ENCODE measurements at regions of chr2 and their contacts with region 1.

Region 1: DNA sequence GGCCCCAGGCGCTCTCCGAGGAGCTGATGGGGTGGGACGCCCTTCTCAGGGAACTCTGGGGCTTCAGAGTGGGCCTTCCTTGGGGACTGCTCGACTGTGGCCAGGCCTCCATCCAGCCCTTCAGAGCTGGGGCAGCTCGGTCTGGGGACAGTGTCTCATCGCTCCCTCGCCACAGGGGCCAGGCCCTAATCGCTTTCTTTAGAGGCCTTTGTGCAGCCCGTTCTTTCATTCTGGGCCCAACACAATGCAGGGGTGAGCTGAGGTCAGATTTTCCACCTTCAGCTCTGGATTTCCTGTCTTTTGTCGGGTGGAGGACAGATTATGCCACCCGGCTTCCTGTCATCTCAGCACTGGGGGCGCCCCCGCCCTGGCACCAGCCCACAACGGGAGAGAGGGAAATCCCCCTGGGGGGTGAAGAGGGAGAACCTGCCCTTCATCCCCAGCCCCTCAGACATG is 25.2 kb downstream of the MYCN start:
- DNase-seq: peak; percentile 85
- H3K4me3 Mint-ChIP-seq: peak overlapping the region; percentile 1
- H3K27ac Mint-ChIP-seq: peak overlapping the region; percentile 58
- H3K4me1 Mint-ChIP-seq: peaks cover 57% of the 10 kb centered on the region
- H3K27me3 Mint-ChIP-seq: peaks cover 2% of the 10 kb centered on the region

Region 2: DNA sequence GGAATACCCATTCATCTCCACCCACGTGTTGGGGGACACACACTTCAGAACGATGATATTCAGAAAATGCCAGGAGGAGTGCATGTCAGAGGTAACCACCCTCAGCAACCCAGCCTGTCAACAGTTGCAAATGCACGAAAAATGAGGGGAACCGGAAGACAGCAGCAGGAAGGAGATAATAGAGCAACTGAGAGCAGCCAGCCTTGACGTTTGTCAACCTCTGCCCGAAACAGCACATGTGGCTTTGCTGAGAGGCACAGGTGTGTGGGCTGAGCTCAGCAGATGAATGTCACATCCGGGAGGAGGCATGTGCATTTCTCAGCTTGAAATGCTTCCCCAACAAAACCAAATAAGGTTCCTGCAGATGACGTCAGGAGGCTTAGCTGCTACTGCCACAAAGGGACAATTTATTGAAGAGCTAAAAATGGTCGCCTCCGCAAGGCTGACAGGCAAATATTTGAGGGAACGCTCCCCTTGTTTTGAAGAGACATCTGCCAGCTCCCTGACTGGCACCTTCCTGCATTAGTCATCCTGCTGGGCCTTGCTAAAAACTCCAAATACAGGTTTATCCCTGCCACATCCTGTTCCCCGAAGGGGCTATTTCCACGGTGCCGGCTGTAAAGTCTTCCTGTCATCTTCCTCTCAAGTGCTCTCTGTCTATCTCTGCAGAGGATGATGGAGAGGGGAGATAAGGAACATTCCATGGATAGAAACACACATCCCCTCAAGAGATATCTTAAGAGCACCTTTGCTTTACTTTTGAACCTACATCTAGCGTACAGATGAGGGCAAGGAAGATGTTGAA is 823.3 kb before region 1 on chr2:
- CTCF ChIA-PET with region 1: no interaction called
- intact Hi-C with region 1: loop called (anchors 2 kb)
- DNase-seq: peak; percentile 90
- H3K4me3 Mint-ChIP-seq: peak overlapping the region; percentile 20
- H3K27ac Mint-ChIP-seq: peak overlapping the region; percentile 90
- H3K4me1 Mint-ChIP-seq: peaks cover 23% of the 10 kb centered on the region
- H3K27me3 Mint-ChIP-seq: peaks cover 5% of the 10 kb centered on the region

Region 3: DNA sequence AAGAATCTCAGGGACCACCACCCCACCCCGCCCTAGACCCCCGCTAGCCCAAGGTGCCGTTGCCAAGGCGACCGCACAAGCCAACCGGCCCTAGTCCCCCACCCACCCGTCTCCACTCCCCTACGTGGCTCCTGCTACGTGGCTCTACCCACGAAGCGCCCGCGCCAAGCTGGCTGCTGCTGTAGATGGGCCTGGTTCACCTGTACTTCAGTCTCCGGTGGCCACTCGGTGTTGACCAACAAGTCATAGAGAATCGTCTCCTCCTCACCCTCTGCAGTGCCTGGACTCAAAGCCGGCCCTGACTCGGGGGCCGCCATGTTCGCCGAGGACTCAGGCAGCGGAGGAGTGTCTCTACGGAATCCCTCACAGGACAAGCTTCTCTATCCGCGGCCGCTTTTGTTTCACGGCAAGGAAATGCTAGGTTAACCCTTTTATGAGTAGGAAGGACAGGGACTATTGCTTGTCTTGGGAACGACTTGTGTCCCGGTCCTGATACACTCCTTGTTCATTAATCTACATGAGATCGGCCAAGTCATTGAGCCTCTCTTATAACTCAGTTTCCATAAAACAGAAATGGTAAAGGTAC is 404.5 kb before region 1 on chr2 and contains the start of gene NBAS:
- CTCF ChIA-PET with region 1: no interaction called
- intact Hi-C with region 1: loop called (anchors 1 kb)
- DNase-seq: peak; percentile 94
- H3K4me3 Mint-ChIP-seq: peak within 1 kb of the TSS; percentile 98
- H3K27ac Mint-ChIP-seq: peak within 1 kb of the TSS; percentile 92
- H3K4me1 Mint-ChIP-seq: peaks cover 32% of the 10 kb centered on the region
- H3K27me3 Mint-ChIP-seq: no peaks in the 10 kb centered on the region
- total RNA-seq, gene NBAS: 45.5 to 46.4 TPM

Region 4: DNA sequence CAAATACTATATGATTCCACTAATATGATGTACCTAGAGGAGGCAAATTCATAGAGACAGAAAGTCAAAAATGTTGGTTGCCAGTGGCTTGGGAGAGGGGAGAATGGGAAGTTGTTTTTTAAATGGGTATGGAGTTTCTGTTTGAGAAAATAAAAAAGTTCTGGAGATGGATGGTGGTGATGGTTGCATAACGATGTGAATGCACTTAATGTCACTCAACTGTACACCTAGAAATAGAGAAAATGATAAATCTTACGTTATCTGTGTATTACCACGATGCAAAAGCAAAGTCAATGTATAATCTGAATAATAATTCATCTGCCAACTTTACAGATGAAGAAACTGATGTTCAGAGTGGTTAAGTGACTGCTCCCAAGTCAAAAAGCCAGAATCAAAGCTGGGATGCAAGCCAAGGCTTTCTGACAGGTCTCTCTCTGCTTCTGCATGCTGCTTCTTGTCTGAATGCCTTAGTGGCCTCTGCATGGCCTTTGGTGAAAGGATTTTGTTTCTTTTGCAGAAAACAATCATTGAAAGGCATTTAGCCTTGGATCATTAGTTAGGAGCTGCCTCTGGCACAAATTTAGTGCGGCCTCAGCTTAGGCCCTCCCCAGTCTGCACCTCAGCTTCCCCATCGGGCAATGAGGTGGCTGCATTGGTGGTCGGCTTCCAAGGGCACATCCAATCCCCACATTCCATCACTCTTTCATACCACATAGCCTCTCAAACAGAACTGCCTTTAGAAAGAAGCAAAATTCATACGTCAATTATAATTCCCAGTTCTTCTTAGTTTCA is 71.7 kb before region 1 on chr2:
- CTCF ChIA-PET with region 1: no interaction called
- intact Hi-C with region 1: no loop called
- DNase-seq: no peak
- H3K4me3 Mint-ChIP-seq: no peak overlapping the region
- H3K27ac Mint-ChIP-seq: no peak overlapping the region
- H3K4me1 Mint-ChIP-seq: no peaks in the 10 kb centered on the region
- H3K27me3 Mint-ChIP-seq: peaks cover 4% of the 10 kb centered on the region

Region 5: GRCh38 chr2:15980605-15981098 is 15.1 kb after region 1 on chr2:
- CTCF ChIA-PET with region 1: no interaction called
- intact Hi-C with region 1: no loop called
- DNase-seq: no peak
- H3K4me3 Mint-ChIP-seq: no peak overlapping the region
- H3K27ac Mint-ChIP-seq: no peak overlapping the region
- H3K4me1 Mint-ChIP-seq: peaks cover 10% of the 10 kb centered on the region
- H3K27me3 Mint-ChIP-seq: no peaks in the 10 kb centered on the region

Region 6: GRCh38 chr2:16005816-16006536 is 40.4 kb after region 1 on chr2:
- CTCF ChIA-PET with region 1: no interaction called
- intact Hi-C with region 1: no loop called
- DNase-seq: no peak
- H3K4me3 Mint-ChIP-seq: no peak overlapping the region
- H3K27ac Mint-ChIP-seq: no peak overlapping the region
- H3K4me1 Mint-ChIP-seq: peaks cover 2% of the 10 kb centered on the region
- H3K27me3 Mint-ChIP-seq: peaks cover 5% of the 10 kb centered on the region

Region 7: DNA sequence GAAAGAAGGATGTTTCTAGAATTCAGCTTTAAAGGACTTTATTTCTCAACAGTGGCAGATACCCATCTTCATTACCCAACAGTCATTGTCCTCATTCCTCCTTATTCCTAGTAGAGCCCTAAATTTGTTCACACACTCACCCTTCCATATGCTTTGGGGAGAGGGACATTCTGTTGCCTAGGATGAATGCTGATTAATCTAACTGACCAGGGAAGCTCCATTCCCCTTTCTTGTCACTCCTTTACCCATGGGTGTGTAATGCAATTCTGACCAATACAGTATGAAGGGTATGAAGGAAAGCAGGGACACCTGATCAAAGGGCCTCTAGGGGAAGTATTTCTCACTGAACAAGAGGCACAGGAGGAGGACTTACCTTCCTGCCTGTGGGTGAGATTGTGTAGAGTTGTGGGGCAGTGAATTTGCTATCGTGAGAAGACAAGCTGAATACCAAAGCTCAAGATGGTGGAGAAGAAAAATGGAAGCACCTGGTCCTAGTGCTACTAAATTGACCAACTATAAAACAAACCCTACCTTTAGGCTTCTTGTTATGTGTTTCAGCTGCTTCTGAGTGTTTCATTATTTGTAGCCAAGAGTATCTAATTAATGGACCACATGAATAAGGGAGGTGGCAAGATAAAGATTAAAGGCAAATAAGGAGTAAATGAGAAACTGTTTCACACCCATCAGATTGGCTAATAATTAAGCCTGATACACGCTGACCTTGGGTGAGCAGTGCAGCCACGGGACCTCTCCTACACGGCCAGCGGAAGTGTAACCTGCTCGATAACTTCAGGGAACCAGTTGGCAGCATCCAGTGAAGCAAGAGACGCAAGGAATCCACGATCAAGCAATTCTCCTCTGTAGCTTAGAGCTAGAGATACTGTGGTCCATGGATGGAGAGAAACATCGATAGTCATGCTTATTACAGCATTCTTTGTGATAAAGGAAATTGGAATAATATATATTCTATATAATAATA is 177.1 kb after region 1 on chr2:
- CTCF ChIA-PET with region 1: no interaction called
- intact Hi-C with region 1: loop called (anchors 2 kb)
- DNase-seq: no peak
- H3K4me3 Mint-ChIP-seq: no peak overlapping the region
- H3K27ac Mint-ChIP-seq: no peak overlapping the region
- H3K4me1 Mint-ChIP-seq: no peaks in the 10 kb centered on the region
- H3K27me3 Mint-ChIP-seq: no peaks in the 10 kb centered on the region

Region 8: GRCh38 chr2:16665748-16666448 is 700.3 kb after region 1 on chr2 and contains the start of gene CYRIA:
- CTCF ChIA-PET with region 1: no interaction called
- intact Hi-C with region 1: loop called (anchors 5 kb)
- DNase-seq: peak; percentile 65
- H3K4me3 Mint-ChIP-seq: peak within 1 kb of the TSS; percentile 78
- H3K27ac Mint-ChIP-seq: peak within 1 kb of the TSS; percentile 73
- H3K4me1 Mint-ChIP-seq: peaks cover 16% of the 10 kb centered on the region
- H3K27me3 Mint-ChIP-seq: peaks cover 57% of the 10 kb centered on the region
- total RNA-seq, gene CYRIA: 1.0 to 1.2 TPM

Region 9: GRCh38 chr2:16745466-16745865 is 779.9 kb after region 1 on chr2:
- CTCF ChIA-PET with region 1: no interaction called
- intact Hi-C with region 1: loop called (anchors 2 kb)
- DNase-seq: peak; percentile 43
- H3K4me3 Mint-ChIP-seq: no peak overlapping the region
- H3K27ac Mint-ChIP-seq: no peak overlapping the region
- H3K4me1 Mint-ChIP-seq: peaks cover 29% of the 10 kb centered on the region
- H3K27me3 Mint-ChIP-seq: peaks cover 20% of the 10 kb centered on the region

Region 10: GRCh38 chr2:16773080-16773713 is 807.6 kb after region 1 on chr2:
- CTCF ChIA-PET with region 1: no interaction called
- intact Hi-C with region 1: no loop called
- DNase-seq: peak; percentile 50
- H3K4me3 Mint-ChIP-seq: no peak overlapping the region
- H3K27ac Mint-ChIP-seq: no peak overlapping the region
- H3K4me1 Mint-ChIP-seq: no peaks in the 10 kb centered on the region
- H3K27me3 Mint-ChIP-seq: peaks cover 26% of the 10 kb centered on the region

Measured in activated naive CD4-positive, alpha-beta T cell treated with anti-CD3 and anti-CD28 coated beads for 36 hours (primary cell).